ENCODE measurements at regions of chr1 and their contacts with region 1.

Region 1: GRCh38 chr1:154335025-154335714 is 9.8 kb downstream of the ATP8B2 start:
- DNase-seq: peak; percentile 96
- H3K4me3 ChIP-seq: no peak overlapping the region
- H3K27ac ChIP-seq: peak overlapping the region; percentile 81 to 100 (median 90)
- H3K4me1 ChIP-seq: peaks cover 8 to 39% (median 38%) of the 10 kb centered on the region in 4 donors
- H3K27me3 ChIP-seq: no peaks in the 10 kb centered on the region
- CTCF ChIP-seq: peak; percentile 88 to 93 (median 91)
- EP300 ChIP-seq: no peak
- POLR2A ChIP-seq: no peak

Region 2: DNA sequence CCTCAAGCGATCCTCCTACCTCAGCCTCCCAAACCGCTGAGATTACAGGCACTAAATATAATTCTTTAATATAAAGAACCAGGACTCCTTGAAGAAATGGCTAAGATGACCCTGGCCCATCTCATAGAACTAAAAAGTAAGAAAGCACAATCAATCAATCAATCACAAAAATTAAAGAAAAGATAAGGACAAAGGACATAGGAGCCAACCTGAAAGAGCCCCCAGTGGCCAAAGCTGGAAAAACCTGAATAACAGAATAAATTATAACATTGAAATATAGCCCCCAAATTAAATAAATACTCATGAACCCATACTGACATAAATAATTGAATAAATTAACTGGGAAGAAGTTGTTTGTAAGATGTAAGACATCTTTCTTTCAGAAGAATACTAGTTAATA is 189.2 kb before region 1 on chr1:
- intact Hi-C with region 1: no loop called
- DNase-seq: no peak
- H3K4me3 ChIP-seq: no peak overlapping the region
- H3K27ac ChIP-seq: no peak overlapping the region
- H3K4me1 ChIP-seq: peaks cover 0 to 12% (median 6%) of the 10 kb centered on the region in 4 donors
- H3K27me3 ChIP-seq: no peaks in the 10 kb centered on the region
- CTCF ChIP-seq: peak in 1 of 3 experiments; percentile 32
- EP300 ChIP-seq: no peak
- POLR2A ChIP-seq: no peak

Region 3: DNA sequence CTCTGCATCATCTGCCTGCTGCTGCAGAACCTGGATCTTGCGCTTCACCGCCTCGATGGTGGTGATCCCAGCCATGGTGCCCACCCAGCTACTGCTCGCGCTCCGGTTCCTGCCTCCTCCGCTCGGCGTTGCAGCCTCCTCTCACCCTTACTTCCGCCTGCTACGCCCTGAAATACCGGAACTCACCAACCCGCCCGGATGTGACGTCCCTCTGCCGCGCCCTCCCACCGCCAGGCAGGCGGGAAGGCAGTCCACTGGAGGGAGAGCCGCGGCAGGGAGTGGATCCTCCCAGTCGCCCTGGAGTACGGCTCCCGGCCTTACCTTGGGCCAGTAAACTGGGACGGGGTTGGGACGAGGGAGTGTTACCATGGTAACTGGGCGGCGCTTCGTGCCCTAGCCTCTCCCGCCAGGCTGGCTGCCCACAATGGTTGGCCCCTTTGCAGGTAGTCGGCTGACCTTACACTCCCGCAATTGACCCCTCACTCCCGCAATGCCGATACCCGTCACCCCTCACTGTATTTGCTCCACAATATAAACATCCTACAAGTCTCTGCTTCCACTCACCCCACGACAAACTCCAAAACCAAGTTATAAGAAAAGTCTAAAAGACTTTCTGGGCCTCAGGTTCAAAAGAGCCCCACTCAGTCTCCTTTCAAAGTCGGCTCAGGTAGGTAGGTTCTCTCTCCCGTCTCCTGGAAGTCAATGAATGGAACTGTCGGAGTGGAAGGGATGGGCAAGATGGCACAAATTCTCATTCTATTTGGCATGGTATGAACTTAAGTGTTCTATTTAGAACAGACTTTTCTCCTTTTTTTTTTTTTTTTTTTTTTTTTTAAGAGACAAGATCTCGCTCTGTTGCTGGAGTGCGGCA is 151.9 kb before region 1 on chr1:
- intact Hi-C with region 1: no loop called
- DNase-seq: peak; percentile 99
- H3K4me3 ChIP-seq: peak overlapping the region; percentile 66 to 97 (median 95)
- H3K27ac ChIP-seq: peak overlapping the region; percentile 88 to 95 (median 92)
- H3K4me1 ChIP-seq: peaks cover 38 to 49% (median 46%) of the 10 kb centered on the region in 4 donors
- H3K27me3 ChIP-seq: no peaks in the 10 kb centered on the region
- CTCF ChIP-seq: peak in 1 of 3 experiments; percentile 20
- EP300 ChIP-seq: no peak
- POLR2A ChIP-seq: peak; percentile 97

Region 4: GRCh38 chr1:154198756-154199562 is 136.2 kb before region 1 on chr1:
- intact Hi-C with region 1: loop called (anchors 10 kb)
- DNase-seq: no peak
- H3K4me3 ChIP-seq: peak overlapping the region in 1 of 4 donors; percentile 20
- H3K27ac ChIP-seq: peak overlapping the region in 3 of 4 donors; percentile 9 to 14 (median 13)
- H3K4me1 ChIP-seq: peaks cover 0 to 11% (median 10%) of the 10 kb centered on the region in 4 donors
- H3K27me3 ChIP-seq: no peaks in the 10 kb centered on the region
- CTCF ChIP-seq: peak; percentile 45 to 65 (median 52)
- EP300 ChIP-seq: no peak
- POLR2A ChIP-seq: no peak

Region 5: DNA sequence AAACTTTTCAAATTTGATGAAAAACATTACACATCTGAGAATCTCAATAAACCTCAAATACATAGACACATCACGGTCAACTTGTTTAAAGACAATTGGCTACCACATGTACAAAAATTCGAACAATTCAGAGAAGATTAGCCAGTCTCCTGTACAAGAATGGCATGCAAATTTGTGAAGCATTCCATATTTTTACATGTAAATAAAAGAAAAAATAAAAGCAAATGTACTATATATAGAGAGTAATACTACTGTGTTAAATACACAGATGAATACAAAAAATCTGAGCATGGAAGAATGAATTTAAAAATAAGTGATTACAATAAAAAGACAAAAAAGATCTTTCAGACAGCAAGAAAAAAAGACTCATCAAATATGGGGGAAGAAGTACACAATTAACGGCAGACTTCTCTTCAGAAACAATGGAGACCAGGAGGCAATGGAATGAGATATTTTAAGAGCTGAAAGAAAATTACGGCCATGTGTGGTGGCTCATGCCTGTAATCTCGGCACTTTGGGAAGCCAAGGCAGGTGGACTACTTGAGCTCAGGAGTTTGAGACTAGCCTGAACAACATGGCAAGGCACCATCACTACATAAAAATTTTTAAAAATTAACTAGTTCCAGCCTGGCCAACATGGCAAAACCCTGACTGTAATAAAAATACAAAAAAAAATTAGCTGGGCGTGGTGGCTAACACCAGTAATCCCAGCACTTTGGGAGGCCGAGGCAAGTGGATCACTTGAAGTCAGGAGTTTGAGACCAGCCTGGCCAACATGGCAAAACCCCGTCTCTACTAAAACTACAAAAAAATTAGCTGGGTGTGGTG is 39.5 kb before region 1 on chr1:
- intact Hi-C with region 1: no loop called
- DNase-seq: no peak
- H3K4me3 ChIP-seq: no peak overlapping the region
- H3K27ac ChIP-seq: no peak overlapping the region
- H3K4me1 ChIP-seq: no peaks in the 10 kb centered on the region
- H3K27me3 ChIP-seq: no peaks in the 10 kb centered on the region
- CTCF ChIP-seq: no peak
- EP300 ChIP-seq: no peak
- POLR2A ChIP-seq: no peak

Measured in esophagus muscularis mucosa (tissue), 4 donors.